ENCODE measurements at regions of chr6 and their contacts with region 1.

Region 1: DNA sequence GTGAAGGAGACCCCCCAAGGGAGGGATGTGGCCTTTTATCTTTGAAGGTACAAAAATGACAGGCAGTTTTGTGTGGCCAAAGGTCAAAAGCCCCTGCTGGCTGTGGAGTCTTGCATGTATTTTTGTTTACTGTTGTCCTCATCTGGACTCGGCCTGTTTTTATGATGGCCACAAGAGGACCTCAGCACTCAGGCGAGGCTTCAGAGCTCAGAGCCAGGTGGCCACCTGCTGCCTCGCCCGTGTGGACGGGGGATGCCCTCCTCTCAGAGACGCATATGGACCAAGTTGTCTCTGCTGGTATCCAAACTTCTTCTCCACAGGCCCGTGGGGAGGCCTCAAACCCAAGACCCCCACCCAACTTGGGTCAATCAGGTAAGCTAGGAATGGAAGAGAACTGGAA is 118.2 kb downstream of the DACT2 start:
- DNase-seq: no peak
- H3K4me3 Mint-ChIP-seq: no peak overlapping the region
- H3K27ac Mint-ChIP-seq: no peak overlapping the region
- H3K4me1 Mint-ChIP-seq: no peaks in the 10 kb centered on the region
- H3K27me3 Mint-ChIP-seq: peaks cover 8% of the 10 kb centered on the region

Region 2: GRCh38 chr6:168107212-168107983 is 94.0 kb before region 1 on chr6:
- intact Hi-C with region 1: no loop called
- DNase-seq: no peak
- H3K4me3 Mint-ChIP-seq: no peak overlapping the region
- H3K27ac Mint-ChIP-seq: no peak overlapping the region
- H3K4me1 Mint-ChIP-seq: no peaks in the 10 kb centered on the region
- H3K27me3 Mint-ChIP-seq: peaks cover 18% of the 10 kb centered on the region

Region 3: DNA sequence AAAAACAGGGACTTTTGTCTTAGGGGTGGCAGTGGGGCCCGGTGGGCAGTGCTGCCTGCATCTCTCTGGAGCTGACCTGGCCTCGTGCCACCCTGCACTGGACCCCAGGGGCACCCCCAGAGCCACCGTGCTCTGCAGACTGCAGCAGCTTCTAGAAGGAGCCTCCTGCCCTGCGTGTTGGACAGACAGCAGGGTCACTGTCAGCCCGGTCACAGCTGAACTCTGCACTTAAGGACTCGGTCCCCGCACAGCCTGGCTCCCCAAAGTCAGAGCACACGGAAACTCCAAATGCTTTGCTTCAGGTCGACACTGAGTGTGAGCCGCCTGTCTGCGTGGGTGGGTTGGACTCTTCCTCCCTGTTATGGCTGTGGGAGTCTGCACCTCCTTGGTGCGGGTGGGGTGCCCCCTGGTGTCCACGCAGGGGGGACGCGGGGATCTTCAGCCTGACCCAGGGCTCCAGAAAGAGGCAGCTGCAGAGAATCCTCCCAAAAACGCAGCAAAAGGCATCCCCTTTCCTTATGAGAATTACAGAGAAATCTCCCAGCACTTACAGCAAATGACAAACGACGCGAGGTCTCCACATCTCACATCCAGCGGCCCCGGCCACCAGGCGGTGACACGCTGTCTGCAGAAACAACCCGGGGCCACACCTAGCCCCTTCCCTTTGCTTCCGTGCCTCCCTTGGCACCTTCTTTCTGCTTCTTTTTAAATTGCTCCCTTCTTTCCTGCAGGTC is 154.5 kb after region 1 on chr6:
- intact Hi-C with region 1: loop called (anchors 2 kb)
- DNase-seq: no peak
- H3K4me3 Mint-ChIP-seq: no peak overlapping the region
- H3K27ac Mint-ChIP-seq: no peak overlapping the region
- H3K4me1 Mint-ChIP-seq: peaks cover 2% of the 10 kb centered on the region
- H3K27me3 Mint-ChIP-seq: no peaks in the 10 kb centered on the region

Measured in activated T-helper 2 cell treated with anti-CD3 and anti-CD28 coated beads, Interferon-gamma antibody, Interleukin-2, Interleukin-4, amounts not matched to agents 10 μg/mL and 5 μg/mL and 100 μg/mL, durations not matched to agents 14 hours and 24 hours and 36 hours (primary cell).